H1 (cell line): ENCODE measurements at regions of chr6 and their contacts with region 1.

Region 1: DNA sequence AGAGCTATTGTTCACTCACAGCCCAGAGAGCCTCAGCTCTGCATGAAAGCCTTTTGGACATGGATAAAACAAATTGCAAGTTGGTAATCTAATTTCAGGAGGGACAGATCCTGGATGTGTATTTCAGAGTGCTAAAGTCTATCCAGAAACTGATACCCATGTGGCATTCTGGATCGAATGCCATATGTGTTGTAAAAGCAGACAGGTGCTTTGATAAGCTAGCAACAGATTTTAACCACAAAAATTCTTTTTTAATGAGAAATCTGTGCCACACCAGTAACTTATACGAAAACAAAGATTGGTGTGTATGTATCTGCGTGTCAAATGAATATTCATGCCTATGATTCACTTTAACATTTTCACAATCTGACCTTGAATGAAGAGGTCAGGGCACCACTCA is 936.6 kb upstream of the MAP3K7 start:
- DNase-seq: no peak
- H3K4me3 ChIP-seq: no peak overlapping the region
- H3K27ac ChIP-seq: no peak overlapping the region
- H3K4me1 ChIP-seq: no peaks in the 10 kb centered on the region
- H3K27me3 ChIP-seq: no peaks in the 10 kb centered on the region
- CTCF ChIP-seq: no peak
- EP300 ChIP-seq: no peak
- POLR2A ChIP-seq: no peak
- RAD21 ChIP-seq: no peak

Region 2: DNA sequence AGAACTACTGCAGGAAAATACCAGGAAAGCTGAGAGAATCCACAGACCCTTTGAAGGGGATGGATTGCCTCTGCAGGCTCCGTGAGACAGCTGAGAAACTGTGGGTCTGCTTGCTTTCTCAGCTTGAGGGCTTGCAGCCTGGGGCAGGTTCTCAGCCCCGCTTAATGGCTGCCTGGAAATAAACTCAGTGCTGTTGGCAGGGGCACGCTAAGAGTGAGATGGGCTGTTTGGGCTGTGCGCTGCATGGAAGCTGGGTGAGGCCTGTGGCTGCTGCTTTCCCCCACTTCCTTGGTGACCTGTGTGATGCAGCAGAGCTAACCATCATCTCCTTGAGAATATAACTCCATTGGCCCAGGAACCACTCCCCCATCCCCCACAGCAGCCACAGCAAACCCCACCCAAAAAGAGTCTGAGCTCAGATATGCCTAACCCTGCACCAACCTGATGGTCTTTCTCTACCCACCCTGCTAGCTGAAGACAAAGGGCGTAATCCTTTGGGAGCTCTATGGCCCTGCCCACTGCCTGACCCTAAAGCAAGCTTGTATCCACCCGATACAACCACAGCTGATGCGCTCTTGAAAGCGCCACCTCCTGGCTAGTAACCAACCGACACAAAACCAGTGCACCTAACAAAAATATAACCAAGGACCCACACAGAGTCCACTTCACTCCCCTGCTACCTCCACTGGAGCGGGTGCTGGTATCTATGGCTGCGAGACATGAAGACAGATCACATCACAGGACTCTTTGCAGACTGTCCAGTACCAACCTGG is 136.0 kb before region 1 on chr6:
- CTCF ChIA-PET with region 1: no interaction called
- POLR2A ChIA-PET with region 1: no interaction called
- DNase-seq: peak; percentile 39 to 68
- H3K4me3 ChIP-seq: no peak overlapping the region
- H3K27ac ChIP-seq: no peak overlapping the region
- H3K4me1 ChIP-seq: peaks cover 0 to 3% (median 0%) of the 10 kb centered on the region in 4 experiments; a peak in 2 of 7 replicates
- H3K27me3 ChIP-seq: no peaks in the 10 kb centered on the region
- CTCF ChIP-seq: peak; percentile 55 to 68 (median 66)
- EP300 ChIP-seq: no peak
- POLR2A ChIP-seq: no peak
- RAD21 ChIP-seq: peak; percentile 57 to 72

Region 3: GRCh38 chr6:91509703-91510102 is 13.8 kb before region 1 on chr6:
- CTCF ChIA-PET with region 1: interaction called, 15 read pairs
- POLR2A ChIA-PET with region 1: no interaction called
- DNase-seq: no peak
- H3K4me3 ChIP-seq: no peak overlapping the region
- H3K27ac ChIP-seq: no peak overlapping the region
- H3K4me1 ChIP-seq: no peaks in the 10 kb centered on the region; a peak in 1 of 7 replicates
- H3K27me3 ChIP-seq: no peaks in the 10 kb centered on the region
- CTCF ChIP-seq: no peak
- EP300 ChIP-seq: no peak
- POLR2A ChIP-seq: no peak
- RAD21 ChIP-seq: no peak